ENCODE measurements at regions of chr5 and their contacts with region 1.

Region 1: GRCh38 chr5:139863855-139864558 is 68.4 kb downstream of the PSD2 start:
- DNase-seq: peak; percentile 12 to 57 (median 28)
- ATAC-seq: peak; percentile 68
- H3K4me3 ChIP-seq: no peak overlapping the region
- H3K4me3 Mint-ChIP-seq: no peak overlapping the region
- H3K27ac ChIP-seq: no peak overlapping the region
- H3K27ac Mint-ChIP-seq: no peak overlapping the region
- H3K4me1 ChIP-seq: no peaks in the 10 kb centered on the region
- H3K4me1 Mint-ChIP-seq: peaks cover 0 to 2% (median 0%) of the 10 kb centered on the region in 7 donors
- H3K27me3 ChIP-seq: no peaks in the 10 kb centered on the region
- H3K27me3 Mint-ChIP-seq: peaks cover 0 to 19% (median 10%) of the 10 kb centered on the region in 5 donors

Region 2: GRCh38 chr5:139593716-139594319 is 270.2 kb before region 1 on chr5:
- CTCF ChIA-PET with region 1: no interaction called
- POLR2A ChIA-PET with region 1: no interaction called
- intact Hi-C with region 1: no loop called
- DNase-seq: no peak
- ATAC-seq: no peak
- H3K4me3 ChIP-seq: no peak overlapping the region
- H3K4me3 Mint-ChIP-seq: no peak overlapping the region
- H3K27ac ChIP-seq: peak overlapping the region; percentile 20
- H3K27ac Mint-ChIP-seq: peak overlapping the region in 1 of 9 donors; percentile 59
- H3K4me1 ChIP-seq: peaks cover 0 to 22% of the 10 kb centered on the region in 2 donors
- H3K4me1 Mint-ChIP-seq: peaks cover 39 to 73% (median 52%) of the 10 kb centered on the region in 7 donors
- H3K27me3 ChIP-seq: no peaks in the 10 kb centered on the region
- H3K27me3 Mint-ChIP-seq: no peaks in the 10 kb centered on the region

Region 3: GRCh38 chr5:139787568-139788293 is 76.3 kb before region 1 on chr5:
- CTCF ChIA-PET with region 1: interaction called, 13 read pairs
- POLR2A ChIA-PET with region 1: interaction called, 3 read pairs
- intact Hi-C with region 1: loop called (anchors 1 kb)
- DNase-seq: peak; percentile 48 to 91 (median 82)
- ATAC-seq: peak; percentile 92
- H3K4me3 ChIP-seq: peak overlapping the region; percentile 84
- H3K4me3 Mint-ChIP-seq: peak overlapping the region; percentile 79 to 88 (median 84)
- H3K27ac ChIP-seq: no peak overlapping the region
- H3K27ac Mint-ChIP-seq: peak overlapping the region in 1 of 9 donors; percentile 41
- H3K4me1 ChIP-seq: peaks cover 4% of the 10 kb centered on the region in 2 donors
- H3K4me1 Mint-ChIP-seq: peaks cover 0 to 7% (median 0%) of the 10 kb centered on the region in 7 donors
- H3K27me3 ChIP-seq: peaks cover 0 to 6% of the 10 kb centered on the region in 2 donors
- H3K27me3 Mint-ChIP-seq: peaks cover 17 to 48% (median 27%) of the 10 kb centered on the region in 5 donors

Region 4: DNA sequence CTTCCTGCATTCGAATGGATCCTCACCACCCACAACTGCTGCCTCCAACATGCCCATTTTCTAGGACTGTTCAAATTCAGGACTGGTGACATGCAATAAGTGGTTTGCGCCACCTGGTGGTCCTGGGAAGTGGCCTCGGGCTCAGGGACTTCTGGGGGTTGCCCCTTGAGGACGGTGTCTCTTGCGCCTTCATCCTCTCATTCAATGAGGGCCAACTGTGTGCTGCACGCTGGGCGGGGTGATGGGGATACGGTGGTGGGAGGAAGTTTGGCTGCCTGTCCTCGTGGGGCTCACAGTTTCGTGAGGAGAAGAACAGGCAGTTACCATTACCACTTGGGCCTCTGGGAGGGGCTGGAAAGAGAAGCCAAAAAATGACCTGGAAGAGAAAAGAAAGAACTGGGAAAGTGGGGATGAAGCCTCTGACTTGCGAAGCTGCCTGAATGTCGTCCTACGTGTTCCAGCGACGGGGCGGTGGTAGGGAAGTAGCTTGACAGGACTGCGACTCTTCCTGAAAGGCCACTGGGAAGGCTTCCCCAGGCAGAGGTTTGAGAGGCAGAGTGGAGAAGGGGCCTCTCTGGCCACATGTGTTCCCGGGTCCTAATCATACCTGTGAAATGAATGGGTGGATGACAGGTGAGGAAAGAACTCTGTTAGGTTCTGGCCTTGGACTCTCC is 19.4 kb before region 1 on chr5:
- CTCF ChIA-PET with region 1: no interaction called
- POLR2A ChIA-PET with region 1: interaction called, 6 read pairs
- intact Hi-C with region 1: loop called (anchors 1 kb)
- DNase-seq: peak; percentile 26 to 62 (median 57)
- ATAC-seq: peak; percentile 28
- H3K4me3 ChIP-seq: no peak overlapping the region
- H3K4me3 Mint-ChIP-seq: peak overlapping the region in 2 of 10 donors; percentile 21 to 49
- H3K27ac ChIP-seq: no peak overlapping the region
- H3K27ac Mint-ChIP-seq: no peak overlapping the region
- H3K4me1 ChIP-seq: peaks cover 0 to 5% of the 10 kb centered on the region in 2 donors
- H3K4me1 Mint-ChIP-seq: peaks cover 7 to 17% (median 12%) of the 10 kb centered on the region in 7 donors
- H3K27me3 ChIP-seq: no peaks in the 10 kb centered on the region
- H3K27me3 Mint-ChIP-seq: peaks cover 13 to 59% (median 16%) of the 10 kb centered on the region in 5 donors

Region 5: GRCh38 chr5:140073296-140073695 is 209.3 kb after region 1 on chr5:
- CTCF ChIA-PET with region 1: no interaction called
- POLR2A ChIA-PET with region 1: no interaction called
- intact Hi-C with region 1: no loop called
- DNase-seq: peak in 6 of 9 donors; percentile 25 to 54 (median 44)
- ATAC-seq: no peak
- H3K4me3 ChIP-seq: no peak overlapping the region
- H3K4me3 Mint-ChIP-seq: no peak overlapping the region
- H3K27ac ChIP-seq: no peak overlapping the region
- H3K27ac Mint-ChIP-seq: no peak overlapping the region
- H3K4me1 ChIP-seq: no peaks in the 10 kb centered on the region
- H3K4me1 Mint-ChIP-seq: no peaks in the 10 kb centered on the region
- H3K27me3 ChIP-seq: no peaks in the 10 kb centered on the region
- H3K27me3 Mint-ChIP-seq: peaks cover 12 to 50% (median 24%) of the 10 kb centered on the region in 5 donors